Calu3 (cell line): ENCODE measurements at regions of chr12 and their contacts with region 1.

Region 1: GRCh38 chr12:130031571-130032189 is 127.9 kb upstream of the TMEM132D start:
- DNase-seq: peak; percentile 65
- H3K4me3 Mint-ChIP-seq: no peak overlapping the region
- H3K27ac Mint-ChIP-seq: no peak overlapping the region
- H3K4me1 Mint-ChIP-seq: no peaks in the 10 kb centered on the region
- H3K27me3 Mint-ChIP-seq: no peaks in the 10 kb centered on the region
- CTCF ChIP-seq: peak; percentile 61

Region 2: GRCh38 chr12:129966146-129966995 is 65.3 kb before region 1 on chr12:
- CTCF ChIA-PET with region 1: no interaction called
- intact Hi-C with region 1: loop called (anchors 5 kb)
- DNase-seq: no peak
- H3K4me3 Mint-ChIP-seq: no peak overlapping the region
- H3K27ac Mint-ChIP-seq: no peak overlapping the region
- H3K4me1 Mint-ChIP-seq: no peaks in the 10 kb centered on the region
- H3K27me3 Mint-ChIP-seq: no peaks in the 10 kb centered on the region
- CTCF ChIP-seq: no peak

Region 3: GRCh38 chr12:130119241-130119861 is 87.7 kb after region 1 on chr12:
- CTCF ChIA-PET with region 1: no interaction called
- intact Hi-C with region 1: no loop called
- DNase-seq: no peak
- H3K4me3 Mint-ChIP-seq: no peak overlapping the region
- H3K27ac Mint-ChIP-seq: no peak overlapping the region
- H3K4me1 Mint-ChIP-seq: no peaks in the 10 kb centered on the region
- H3K27me3 Mint-ChIP-seq: no peaks in the 10 kb centered on the region
- CTCF ChIP-seq: no peak